Motor neuron (in vitro differentiated cells): ENCODE measurements at regions of chr9 and their contacts with region 1.

Region 1: DNA sequence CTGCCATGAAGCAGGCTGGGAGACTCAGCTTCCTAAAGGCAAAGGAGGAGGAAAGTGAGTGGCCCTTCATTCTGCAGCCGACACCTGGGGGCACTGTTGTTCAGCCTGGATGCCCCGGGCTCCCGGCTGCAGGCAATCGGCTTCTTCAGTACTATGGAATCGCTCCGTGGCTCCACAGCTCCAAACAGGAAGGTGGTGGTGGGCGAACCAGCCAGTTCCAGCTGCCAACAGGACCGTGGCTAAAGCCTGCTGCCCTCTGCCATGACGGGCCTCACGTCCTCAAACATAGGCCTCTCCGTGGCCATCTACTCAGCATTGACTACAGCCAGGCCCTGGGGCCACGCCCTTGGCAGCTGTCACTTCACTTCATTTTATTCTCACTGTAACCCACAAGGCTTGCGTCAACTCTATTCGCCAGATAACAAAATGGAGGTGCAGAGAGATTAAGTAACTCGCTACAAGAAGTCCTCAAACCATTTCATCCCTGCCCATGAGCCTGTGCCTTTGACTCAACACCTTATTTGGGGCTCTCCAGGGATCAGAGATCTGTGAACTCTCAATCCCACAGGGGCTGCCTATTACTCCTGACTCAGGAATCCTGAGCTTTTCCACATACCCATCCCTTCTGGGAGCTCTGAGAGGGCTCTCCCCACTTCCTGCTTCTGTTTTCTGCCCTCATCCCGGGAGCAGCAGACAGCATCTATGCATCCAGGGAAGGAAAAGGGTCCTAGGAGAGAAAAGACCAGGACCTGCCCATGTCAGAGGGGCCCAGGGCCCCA is 38.0 kb downstream of the PAX5 start:
- ATAC-seq: peak; percentile 59 to 93 (median 85)
- H3K4me3 ChIP-seq: no peak overlapping the region
- H3K27ac ChIP-seq: no peak overlapping the region
- H3K4me1 ChIP-seq: no peaks in the 10 kb centered on the region

Region 2: GRCh38 chr9:36018891-36019720 is 977.0 kb before region 1 on chr9:
- in situ Hi-C with region 1: no loop called
- ATAC-seq: peak in 1 of 8 experiments; percentile 40
- H3K4me3 ChIP-seq: no peak overlapping the region
- H3K27ac ChIP-seq: no peak overlapping the region
- H3K4me1 ChIP-seq: no peaks in the 10 kb centered on the region

Region 3: GRCh38 chr9:36584622-36585470 is 411.3 kb before region 1 on chr9:
- in situ Hi-C with region 1: no loop called
- ATAC-seq: no peak
- H3K4me3 ChIP-seq: no peak overlapping the region
- H3K27ac ChIP-seq: no peak overlapping the region
- H3K4me1 ChIP-seq: no peaks in the 10 kb centered on the region

Region 4: GRCh38 chr9:36632892-36633291 is 363.2 kb before region 1 on chr9:
- in situ Hi-C with region 1: loop called in 1 of 9 experiments (anchors 25 kb)
- ATAC-seq: peak in 5 of 8 experiments; percentile 39 to 67 (median 54)
- H3K4me3 ChIP-seq: no peak overlapping the region
- H3K27ac ChIP-seq: no peak overlapping the region
- H3K4me1 ChIP-seq: no peaks in the 10 kb centered on the region

Region 5: DNA sequence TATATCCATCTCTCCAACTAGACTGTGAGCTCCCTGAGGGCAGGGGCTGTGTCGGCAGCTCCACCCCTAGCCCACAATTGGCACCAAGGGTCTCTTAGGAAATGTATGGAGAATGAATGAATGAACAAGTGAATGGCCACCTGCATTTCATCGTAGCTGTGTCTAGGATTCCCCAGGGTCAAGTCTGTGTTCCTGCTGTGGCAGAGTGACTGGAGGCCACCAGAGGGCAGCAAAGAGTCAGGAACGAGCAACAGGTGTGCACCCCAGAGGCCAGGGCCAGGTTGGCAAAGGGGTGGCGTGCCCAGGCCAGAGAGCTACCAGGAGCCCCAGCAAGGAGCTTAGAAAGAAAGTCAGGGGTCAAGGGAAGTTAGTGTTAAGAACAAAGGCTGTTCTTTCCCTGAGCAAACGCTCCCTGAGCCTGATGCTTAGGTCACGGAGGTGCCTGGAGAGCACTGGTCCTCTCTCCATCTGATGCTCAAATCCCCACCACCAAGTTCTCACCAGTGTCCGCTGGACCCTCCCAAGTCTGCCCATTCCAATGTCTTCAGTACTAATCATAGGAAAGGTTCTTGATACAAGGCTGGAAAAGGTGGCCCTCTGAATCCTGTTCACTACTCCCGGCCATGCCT is 122.8 kb before region 1 on chr9:
- in situ Hi-C with region 1: loop called in 1 of 9 experiments (anchors 5 kb)
- ATAC-seq: peak in 4 of 8 experiments; percentile 49 to 98 (median 93)
- H3K4me3 ChIP-seq: no peak overlapping the region
- H3K27ac ChIP-seq: no peak overlapping the region
- H3K4me1 ChIP-seq: peaks cover 10 to 14% of the 10 kb centered on the region in 2 donors

Region 6: DNA sequence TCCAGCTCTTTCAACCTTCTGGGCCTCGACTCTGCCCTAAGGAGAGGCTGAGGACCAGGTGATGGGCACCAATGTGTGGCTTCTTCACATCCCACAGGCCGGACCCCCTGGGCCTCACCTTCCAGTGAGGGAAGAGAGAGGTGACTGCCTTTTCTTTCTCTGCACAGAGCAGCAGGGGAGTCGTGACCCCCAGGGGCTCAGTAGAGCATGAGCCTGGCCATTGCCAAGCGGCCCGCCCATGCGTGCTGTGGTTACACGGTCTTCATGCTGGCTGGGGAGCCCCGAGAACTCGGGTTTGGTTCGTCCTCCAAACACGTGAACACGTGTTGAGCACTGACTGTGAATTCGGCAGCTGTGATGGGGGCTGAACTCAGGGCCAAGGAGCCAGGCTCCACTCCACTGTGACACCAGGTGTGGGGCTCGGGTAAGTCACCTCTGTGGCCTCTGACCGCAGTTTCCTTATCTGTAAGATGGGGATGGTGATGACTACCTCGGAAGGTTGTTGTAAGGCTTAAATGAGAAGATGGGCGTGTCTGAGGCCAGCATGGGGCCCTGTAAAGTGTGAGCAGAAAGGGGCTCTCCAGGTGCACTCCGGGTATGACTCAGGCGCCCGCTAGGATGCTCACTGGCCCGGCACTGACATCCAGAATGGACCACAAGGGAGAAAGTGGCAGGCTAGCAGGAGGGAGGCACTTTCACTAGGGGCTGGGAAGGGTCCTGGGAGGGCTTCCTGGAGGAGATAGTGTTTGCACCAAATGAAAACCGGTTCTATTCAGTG is 413.0 kb after region 1 on chr9:
- in situ Hi-C with region 1: loop called in 1 of 9 experiments (anchors 10 kb)
- ATAC-seq: no peak
- H3K4me3 ChIP-seq: no peak overlapping the region
- H3K27ac ChIP-seq: no peak overlapping the region
- H3K4me1 ChIP-seq: no peaks in the 10 kb centered on the region